ENCODE measurements at regions of chr6 and their contacts with region 1.

Region 1: DNA sequence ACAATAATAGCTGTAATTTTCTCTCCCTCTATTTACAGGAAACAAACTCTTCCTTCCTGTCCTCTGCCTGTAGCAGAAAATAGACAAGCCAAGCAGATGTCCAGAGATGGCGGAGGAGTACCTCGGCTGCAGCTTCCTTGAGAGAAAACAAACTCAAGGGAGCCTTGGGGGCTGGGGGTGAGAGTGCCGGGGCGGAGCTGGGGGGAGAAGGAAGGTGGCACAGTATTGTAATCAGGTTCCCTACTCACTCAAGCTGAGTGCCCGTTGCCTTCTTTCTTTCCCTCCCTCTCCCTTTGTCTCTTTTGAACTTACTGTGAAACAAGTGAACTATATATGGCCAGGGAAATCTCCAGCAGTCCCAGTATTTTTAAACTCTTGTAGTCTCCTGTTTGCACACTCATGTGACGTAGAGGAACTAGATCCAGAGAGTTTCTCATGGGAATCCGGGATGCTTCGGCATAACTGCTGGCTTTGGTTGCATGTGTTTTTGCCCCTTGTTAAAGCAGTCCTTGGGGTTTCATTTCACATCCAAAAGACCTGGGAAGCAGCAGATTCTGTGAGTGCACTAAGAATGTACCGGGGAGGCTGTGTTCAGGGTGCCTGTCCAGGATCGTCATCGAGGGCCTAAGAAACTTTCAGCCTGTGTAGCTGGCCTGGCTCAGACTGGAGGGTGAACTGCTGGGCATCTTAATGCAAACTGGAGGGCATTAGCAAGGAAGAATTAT is 44.6 kb upstream of the HDDC2 start:
- DNase-seq: no peak
- H3K4me3 Mint-ChIP-seq: no peak overlapping the region
- H3K27ac Mint-ChIP-seq: no peak overlapping the region
- H3K4me1 Mint-ChIP-seq: no peaks in the 10 kb centered on the region
- H3K27me3 Mint-ChIP-seq: peaks cover 25% of the 10 kb centered on the region
- CTCF ChIP-seq: no peak

Region 2: GRCh38 chr6:125273965-125274364 is 72.4 kb before region 1 on chr6:
- CTCF ChIA-PET with region 1: no interaction called
- POLR2A ChIA-PET with region 1: no interaction called
- intact Hi-C with region 1: no loop called
- DNase-seq: peak; percentile 99
- H3K4me3 Mint-ChIP-seq: peak overlapping the region; percentile 18
- H3K27ac Mint-ChIP-seq: peak overlapping the region; percentile 79
- H3K4me1 Mint-ChIP-seq: peaks cover 30% of the 10 kb centered on the region
- H3K27me3 Mint-ChIP-seq: no peaks in the 10 kb centered on the region
- CTCF ChIP-seq: no peak

Region 3: GRCh38 chr6:125301435-125302391 is 44.6 kb before region 1 on chr6 and contains the start of gene HDDC2:
- CTCF ChIA-PET with region 1: no interaction called
- POLR2A ChIA-PET with region 1: no interaction called
- intact Hi-C with region 1: no loop called
- DNase-seq: peak; percentile 60
- H3K4me3 Mint-ChIP-seq: peak within 1 kb of the TSS; percentile 79
- H3K27ac Mint-ChIP-seq: peak within 1 kb of the TSS; percentile 33
- H3K4me1 Mint-ChIP-seq: peaks cover 31% of the 10 kb centered on the region
- H3K27me3 Mint-ChIP-seq: peaks cover 7% of the 10 kb centered on the region
- CTCF ChIP-seq: no peak
- total RNA-seq, gene HDDC2: 141 and 167 TPM in 2 replicates

Region 4: GRCh38 chr6:125533710-125534397 is 187.5 kb after region 1 on chr6:
- CTCF ChIA-PET with region 1: interaction called, 3 read pairs
- POLR2A ChIA-PET with region 1: no interaction called
- intact Hi-C with region 1: loop called (anchors 10 kb)
- DNase-seq: no peak
- H3K4me3 Mint-ChIP-seq: no peak overlapping the region
- H3K27ac Mint-ChIP-seq: no peak overlapping the region
- H3K4me1 Mint-ChIP-seq: no peaks in the 10 kb centered on the region
- H3K27me3 Mint-ChIP-seq: peaks cover 98% of the 10 kb centered on the region
- CTCF ChIP-seq: no peak

Measured in MCF 10A (cell line).